AG04449 (cell line): ENCODE measurements at regions of chr15 and their contacts with region 1.

Region 1: DNA sequence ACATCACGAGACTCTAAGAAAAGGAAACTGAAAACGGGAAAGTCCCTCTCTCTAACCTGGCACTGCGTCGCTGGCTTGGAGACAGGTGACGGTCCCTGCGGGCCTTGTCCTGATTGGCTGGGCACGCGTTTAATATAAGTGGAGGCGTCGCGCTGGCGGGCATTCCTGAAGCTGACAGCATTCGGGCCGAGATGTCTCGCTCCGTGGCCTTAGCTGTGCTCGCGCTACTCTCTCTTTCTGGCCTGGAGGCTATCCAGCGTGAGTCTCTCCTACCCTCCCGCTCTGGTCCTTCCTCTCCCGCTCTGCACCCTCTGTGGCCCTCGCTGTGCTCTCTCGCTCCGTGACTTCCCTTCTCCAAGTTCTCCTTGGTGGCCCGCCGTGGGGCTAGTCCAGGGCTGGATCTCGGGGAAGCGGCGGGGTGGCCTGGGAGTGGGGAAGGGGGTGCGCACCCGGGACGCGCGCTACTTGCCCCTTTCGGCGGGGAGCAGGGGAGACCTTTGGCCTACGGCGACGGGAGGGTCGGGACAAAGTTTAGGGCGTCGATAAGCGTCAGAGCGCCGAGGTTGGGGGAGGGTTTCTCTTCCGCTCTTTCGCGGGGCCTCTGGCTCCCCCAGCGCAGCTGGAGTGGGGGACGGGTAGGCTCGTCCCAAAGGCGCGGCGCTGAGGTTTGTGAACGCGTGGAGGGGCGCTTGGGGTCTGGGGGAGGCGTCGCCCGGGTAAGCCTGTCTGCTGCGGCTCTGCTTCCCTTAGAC is at the start of gene B2M:
- DNase-seq: peak; percentile 83
- H3K4me3 ChIP-seq: peak within 1 kb of the TSS; percentile 99
- CTCF ChIP-seq: no peak

Region 2: GRCh38 chr15:44593042-44593736 is 118.3 kb before region 1 on chr15:
- CTCF ChIA-PET with region 1: no interaction called
- POLR2A ChIA-PET with region 1: no interaction called
- DNase-seq: no peak
- H3K4me3 ChIP-seq: no peak overlapping the region
- CTCF ChIP-seq: peak; percentile 5

Region 3: DNA sequence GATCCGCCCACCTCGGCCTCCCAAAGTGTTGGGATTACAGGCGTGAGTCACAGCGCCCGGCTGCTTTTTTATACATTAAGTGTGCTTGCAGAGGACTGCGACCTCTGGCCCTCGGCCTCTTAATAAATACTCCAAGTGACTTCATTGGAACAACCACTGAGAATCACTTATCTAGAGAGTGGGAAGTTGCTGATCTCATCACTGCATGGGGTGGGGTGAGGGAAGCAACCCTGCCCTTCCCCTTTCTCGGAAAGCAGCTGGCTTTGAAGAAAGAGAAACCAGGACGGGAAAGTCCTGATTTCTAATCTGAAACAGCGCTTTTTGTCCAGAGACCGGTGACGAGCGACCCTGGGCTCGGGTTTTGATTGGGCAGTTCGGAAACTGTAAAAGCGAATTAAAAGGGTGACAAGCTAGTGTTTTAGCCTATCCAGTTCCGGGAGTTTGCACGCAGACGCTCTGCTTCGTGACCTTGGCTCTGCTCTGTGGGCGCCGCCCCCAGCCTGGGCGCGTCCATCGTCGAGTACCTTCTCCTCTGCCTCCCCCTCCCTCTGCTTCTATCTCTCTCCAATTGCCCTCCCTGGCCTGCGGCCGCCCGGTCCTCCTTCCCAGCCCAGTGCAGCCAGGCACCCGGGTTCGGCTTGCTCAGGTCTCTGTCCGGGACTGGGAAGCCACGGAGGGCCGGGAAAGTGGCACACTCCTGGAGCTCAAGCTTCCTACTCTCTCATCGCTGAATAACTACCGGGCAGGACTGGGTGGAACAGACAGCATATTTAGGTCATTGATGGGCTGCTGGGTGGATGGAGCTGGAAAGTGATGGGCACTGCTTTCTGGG is 17.3 kb after region 1 on chr15:
- CTCF ChIA-PET with region 1: interaction called, 52 read pairs
- POLR2A ChIA-PET with region 1: interaction called, 73 read pairs
- DNase-seq: peak; percentile 91
- H3K4me3 ChIP-seq: peak overlapping the region; percentile 83
- CTCF ChIP-seq: no peak